Uterus (tissue), 4 donors: ENCODE measurements at regions of chr11 and their contacts with region 1.

Region 1: GRCh38 chr11:75826461-75827230 is 11.6 kb downstream of the UVRAG start:
- DNase-seq: no peak
- H3K4me3 ChIP-seq: peak overlapping the region in 1 of 2 donors; percentile 2
- H3K27ac ChIP-seq: peak overlapping the region; percentile 77 to 90
- H3K4me1 ChIP-seq: no peaks in the 10 kb centered on the region
- H3K27me3 ChIP-seq: no peaks in the 10 kb centered on the region
- CTCF ChIP-seq: no peak
- POLR2A ChIP-seq: no peak

Region 2: DNA sequence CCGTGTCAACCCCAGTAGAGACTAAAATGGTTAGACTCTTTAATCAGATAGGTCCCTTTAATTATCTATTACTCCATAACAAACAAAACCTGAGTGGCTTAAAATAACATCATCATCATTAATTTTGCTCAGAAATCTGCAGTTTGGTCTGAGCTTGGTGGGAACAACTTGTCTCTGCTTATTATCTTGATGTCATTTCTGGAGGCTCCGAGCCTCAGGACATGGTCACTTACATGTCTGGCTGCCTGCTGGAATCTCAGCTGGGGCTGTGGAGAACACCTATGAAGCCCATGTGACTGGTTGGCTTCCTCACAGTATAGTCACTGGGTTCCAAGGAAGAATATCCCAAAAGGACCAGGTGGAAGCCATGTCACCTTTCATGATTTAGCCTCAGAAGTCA is 15.1 kb after region 1 on chr11:
- intact Hi-C with region 1: loop called (anchors 2 kb)
- DNase-seq: no peak
- H3K4me3 ChIP-seq: no peak overlapping the region
- H3K27ac ChIP-seq: no peak overlapping the region
- H3K4me1 ChIP-seq: no peaks in the 10 kb centered on the region
- H3K27me3 ChIP-seq: no peaks in the 10 kb centered on the region
- CTCF ChIP-seq: no peak
- POLR2A ChIP-seq: no peak